Mammary epithelial cell (primary cell): ENCODE measurements at regions of chr18 and their contacts with region 1.

Region 1: GRCh38 chr18:46067431-46068007 is 4.5 kb downstream of the PSTPIP2 start:
- DNase-seq: no peak
- H3K4me3 ChIP-seq: no peak overlapping the region
- H3K27ac ChIP-seq: no peak overlapping the region
- H3K4me1 ChIP-seq: peaks cover 41% of the 10 kb centered on the region
- H3K27me3 ChIP-seq: no peaks in the 10 kb centered on the region
- CTCF ChIP-seq: no peak

Region 2: DNA sequence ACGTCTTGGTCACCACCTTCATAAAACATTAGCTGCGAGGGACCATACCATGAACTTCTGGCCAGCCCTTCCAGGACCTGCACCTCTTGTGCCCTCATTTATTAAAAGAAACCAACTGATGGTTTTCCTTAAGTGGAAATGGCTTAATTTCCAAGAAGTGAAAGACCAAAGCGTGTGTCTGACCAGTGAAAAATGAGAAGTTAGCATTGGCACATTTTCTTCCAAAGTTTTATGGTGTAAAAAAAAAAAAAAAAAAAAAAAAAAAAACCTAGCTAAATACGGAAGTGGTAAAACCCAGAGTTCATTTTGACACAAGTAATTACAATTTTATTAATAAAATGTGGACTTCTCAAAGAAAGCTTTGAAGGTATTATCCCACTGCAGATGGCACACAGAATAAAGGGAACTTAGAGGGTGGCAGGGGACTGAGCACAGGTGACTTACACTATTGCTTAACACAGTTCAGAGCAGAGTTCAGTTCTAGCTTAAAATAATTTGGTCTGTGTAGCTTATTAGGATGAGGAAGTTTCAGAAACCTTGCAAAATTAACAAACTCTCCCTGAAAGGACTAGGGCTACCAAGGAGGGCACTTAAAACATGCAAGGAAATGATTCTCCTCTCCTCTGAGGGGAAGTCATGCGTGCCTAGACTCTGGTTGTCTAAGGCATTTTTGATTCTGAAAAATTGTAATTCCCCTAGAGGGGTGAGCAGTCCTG is 58.2 kb before region 1 on chr18:
- CTCF ChIA-PET with region 1: no interaction called
- dilution Hi-C with region 1: no loop called
- in situ Hi-C with region 1: no loop called
- intact Hi-C with region 1: loop called (anchors 10 kb)
- DNase-seq: no peak
- H3K4me3 ChIP-seq: no peak overlapping the region
- H3K27ac ChIP-seq: no peak overlapping the region
- H3K4me1 ChIP-seq: no peaks in the 10 kb centered on the region
- H3K27me3 ChIP-seq: no peaks in the 10 kb centered on the region
- CTCF ChIP-seq: no peak